ENCODE measurements at regions of chr20 and their contacts with region 1.

Region 1: DNA sequence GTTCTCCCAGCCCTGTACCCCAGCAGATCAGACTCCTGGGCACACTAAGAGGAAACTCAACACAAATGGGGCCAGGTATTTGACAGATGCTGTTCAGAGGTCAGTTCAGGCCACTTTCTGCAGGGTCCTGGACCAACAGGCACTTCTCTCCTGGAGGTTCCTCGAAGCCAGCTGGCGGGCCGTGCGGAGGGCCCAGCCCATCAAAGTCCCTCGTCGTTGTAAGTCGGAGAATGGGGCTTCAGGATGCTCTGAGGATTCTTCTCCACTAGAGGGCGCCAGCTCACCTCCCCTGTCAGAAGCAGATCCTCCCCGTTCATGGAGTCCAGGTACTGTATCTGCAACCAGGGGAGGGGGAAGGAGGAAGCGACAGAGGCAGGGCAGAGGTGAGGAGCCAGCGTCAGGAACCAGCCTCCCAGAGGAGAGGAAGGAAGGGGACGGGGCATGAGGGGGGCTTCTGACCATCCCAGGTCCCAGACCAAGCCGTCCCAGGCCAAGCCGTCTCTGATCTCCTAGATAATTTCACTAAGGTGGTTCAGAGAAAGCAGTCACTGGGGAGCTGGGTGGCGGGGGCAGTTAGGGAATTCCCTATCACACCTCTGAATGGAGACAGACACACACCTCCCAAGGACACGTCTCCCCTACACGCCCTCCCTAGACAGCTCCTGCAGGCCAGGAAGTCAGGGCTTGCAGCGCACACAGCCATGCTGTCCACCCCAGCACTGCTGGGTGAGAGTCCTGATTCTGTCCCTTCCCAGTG is 11.7 kb upstream of the FAM83C start:
- DNase-seq: peak; percentile 89 to 92
- ATAC-seq: peak; percentile 52 to 73
- H3K4me3 ChIP-seq: no peak overlapping the region
- H3K27ac ChIP-seq: peak overlapping the region; percentile 95 to 96
- H3K4me1 ChIP-seq: peaks cover 68% of the 10 kb centered on the region
- CTCF ChIP-seq: peak; percentile 96
- EP300 ChIP-seq: no peak
- POLR2A ChIP-seq: no peak
- RAD21 ChIP-seq: peak; percentile 96 to 97

Region 2: GRCh38 chr20:35269055-35269781 is 34.7 kb before region 1 on chr20:
- CTCF ChIA-PET with region 1: interaction called, 37 read pairs
- POLR2A ChIA-PET with region 1: no interaction called
- DNase-seq: peak; percentile 76 to 81
- ATAC-seq: peak; percentile 81 to 84
- H3K4me3 ChIP-seq: no peak overlapping the region
- H3K27ac ChIP-seq: peak overlapping the region; percentile 49 to 97
- H3K4me1 ChIP-seq: peaks cover 71% of the 10 kb centered on the region
- CTCF ChIP-seq: peak; percentile 89
- EP300 ChIP-seq: no peak
- POLR2A ChIP-seq: no peak
- RAD21 ChIP-seq: peak; percentile 96

Region 3: DNA sequence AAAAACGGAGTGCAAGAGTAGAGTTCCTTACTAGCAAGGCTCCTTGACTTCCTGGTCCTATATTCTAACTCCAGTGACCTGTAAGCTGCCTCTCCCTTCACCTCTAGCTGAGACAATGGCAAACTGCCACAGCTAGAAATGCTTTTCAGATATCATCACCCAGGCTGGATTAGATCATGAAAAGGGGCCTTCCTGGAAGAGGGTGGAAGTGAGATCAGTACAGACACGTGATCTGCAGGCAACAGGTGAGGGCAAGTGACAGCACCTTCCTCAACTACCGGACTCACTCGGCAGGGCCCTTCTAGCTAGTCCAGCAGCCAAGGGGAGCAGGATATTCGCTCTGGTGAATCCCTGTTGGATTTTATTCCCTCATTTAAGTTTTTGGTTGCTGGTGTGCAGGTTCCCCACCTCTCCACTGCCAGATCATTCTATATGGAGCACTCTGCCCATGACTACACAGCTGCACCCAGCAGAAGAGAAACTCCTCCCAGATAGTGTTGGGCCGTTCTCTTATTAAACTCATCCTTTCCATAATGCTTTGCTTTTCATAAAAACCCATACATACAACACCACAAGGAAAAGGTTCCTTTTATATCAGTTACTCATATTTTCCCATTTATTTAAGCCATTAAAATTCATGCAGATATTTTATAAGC is 14.7 kb after region 1 on chr20:
- CTCF ChIA-PET with region 1: interaction called, 157 read pairs
- POLR2A ChIA-PET with region 1: interaction called, 4 read pairs
- DNase-seq: peak; percentile 64 to 87
- ATAC-seq: peak; percentile 78 to 82
- H3K4me3 ChIP-seq: no peak overlapping the region
- H3K27ac ChIP-seq: peak overlapping the region; percentile 76 to 89
- H3K4me1 ChIP-seq: peaks cover 57% of the 10 kb centered on the region
- CTCF ChIP-seq: no peak
- EP300 ChIP-seq: peak; percentile 12 to 40; a peak in 1 of 5 replicates
- POLR2A ChIP-seq: no peak
- RAD21 ChIP-seq: no peak

Region 4: DNA sequence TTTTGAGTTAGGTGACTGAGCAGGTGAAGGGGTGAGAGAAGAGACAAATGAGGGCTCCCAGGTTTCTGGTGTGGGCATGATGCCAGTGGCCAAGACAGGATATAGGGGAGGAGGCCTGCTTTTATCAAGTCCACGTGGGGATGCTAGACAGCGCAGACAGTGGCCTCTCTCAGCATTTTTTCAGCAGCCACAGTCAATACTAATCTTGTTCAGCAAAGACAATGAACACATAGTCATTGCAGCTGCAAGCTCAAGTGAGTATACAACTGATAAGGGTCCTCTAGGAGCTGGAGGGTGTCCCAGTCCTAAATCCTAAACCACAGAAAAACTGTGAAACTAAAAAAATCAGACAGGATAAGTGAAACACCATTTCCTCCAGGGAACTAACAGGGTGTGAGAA is 59.3 kb after region 1 on chr20:
- CTCF ChIA-PET with region 1: interaction called, 28 read pairs
- POLR2A ChIA-PET with region 1: no interaction called
- DNase-seq: no peak
- ATAC-seq: no peak
- H3K4me3 ChIP-seq: no peak overlapping the region
- H3K27ac ChIP-seq: no peak overlapping the region
- H3K4me1 ChIP-seq: peaks cover 4% of the 10 kb centered on the region
- CTCF ChIP-seq: no peak
- EP300 ChIP-seq: no peak
- POLR2A ChIP-seq: no peak
- RAD21 ChIP-seq: no peak

Region 5: GRCh38 chr20:35432430-35432735 is 128.5 kb after region 1 on chr20:
- CTCF ChIA-PET with region 1: interaction called, 267 read pairs
- POLR2A ChIA-PET with region 1: interaction called, 4 read pairs
- DNase-seq: no peak
- ATAC-seq: peak in 1 of 2 experiments; percentile 37; a peak in 3 of 6 replicates
- H3K4me3 ChIP-seq: no peak overlapping the region
- H3K27ac ChIP-seq: no peak overlapping the region
- H3K4me1 ChIP-seq: no peaks in the 10 kb centered on the region
- CTCF ChIP-seq: no peak
- EP300 ChIP-seq: no peak
- POLR2A ChIP-seq: no peak
- RAD21 ChIP-seq: no peak

Region 6: GRCh38 chr20:35463455-35464300 is 159.8 kb after region 1 on chr20:
- CTCF ChIA-PET with region 1: interaction called, 30 read pairs
- POLR2A ChIA-PET with region 1: no interaction called
- DNase-seq: peak; percentile 74
- ATAC-seq: peak; percentile 90 to 93
- H3K4me3 ChIP-seq: no peak overlapping the region
- H3K27ac ChIP-seq: 0 out of 6 replicates have a peak overlapping the region, but pooled peaks of 1 of the 2 experiments have one; percentile 6
- H3K4me1 ChIP-seq: peaks cover 21% of the 10 kb centered on the region
- CTCF ChIP-seq: peak; percentile 83
- EP300 ChIP-seq: no peak
- POLR2A ChIP-seq: no peak
- RAD21 ChIP-seq: peak; percentile 77 to 80

Measured in A549 (cell line).